Heart left ventricle (tissue), 16 donors: ENCODE measurements at regions of chr1 and their contacts with region 1.

Region 1: DNA sequence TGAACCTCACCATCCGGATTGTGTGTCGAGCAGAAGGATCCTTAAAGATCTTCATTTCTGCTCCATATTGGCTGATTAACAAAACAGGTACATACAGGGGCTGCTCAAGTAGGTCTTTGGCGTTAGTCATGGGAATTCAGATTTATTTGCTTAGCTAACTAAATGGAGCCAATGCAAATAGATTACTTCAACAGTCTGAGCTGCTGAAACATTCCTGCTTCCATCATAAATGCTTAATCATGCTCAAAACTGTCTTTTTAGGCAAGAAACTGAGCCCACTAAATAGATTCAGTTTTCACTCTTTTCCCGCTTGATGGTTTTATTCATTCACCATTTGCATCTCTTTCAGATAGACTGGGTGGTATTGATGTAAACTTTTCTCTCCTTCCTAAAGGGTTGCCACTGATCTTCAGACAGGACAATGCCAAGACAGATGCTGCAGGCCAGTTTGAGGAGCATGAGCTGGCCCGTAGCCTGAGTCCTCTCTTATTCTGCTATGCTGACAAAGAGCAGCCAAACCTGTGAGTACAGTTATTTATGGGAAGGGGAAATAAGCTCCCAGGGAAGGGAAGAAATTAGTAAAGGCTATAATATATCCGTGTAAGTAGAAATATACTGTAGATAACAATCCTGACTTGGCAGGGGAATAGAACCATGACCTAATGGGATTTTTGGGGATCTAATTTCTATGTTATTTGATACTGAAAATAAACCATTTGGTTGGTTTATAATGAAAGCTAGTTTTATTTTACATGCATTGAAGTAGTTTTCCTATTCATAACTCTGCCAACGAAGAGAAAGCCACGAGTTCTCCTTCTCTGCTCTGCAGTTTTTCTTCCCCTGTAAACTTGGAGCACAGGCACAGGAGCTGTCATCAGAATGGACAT is 126.4 kb downstream of the VPS13D start:
- DNase-seq: no peak
- ATAC-seq: peak in 3 of 4 donors; percentile 33 to 61 (median 42)
- H3K4me3 ChIP-seq: no peak overlapping the region
- H3K27ac ChIP-seq: peak overlapping the region in 4 of 12 donors; percentile 7 to 52 (median 38)
- H3K4me1 ChIP-seq: peaks cover 0 to 35% (median 19%) of the 10 kb centered on the region in 12 donors
- H3K27me3 ChIP-seq: no peaks in the 10 kb centered on the region
- CTCF ChIP-seq: no peak
- POLR2A ChIP-seq: no peak

Region 2: DNA sequence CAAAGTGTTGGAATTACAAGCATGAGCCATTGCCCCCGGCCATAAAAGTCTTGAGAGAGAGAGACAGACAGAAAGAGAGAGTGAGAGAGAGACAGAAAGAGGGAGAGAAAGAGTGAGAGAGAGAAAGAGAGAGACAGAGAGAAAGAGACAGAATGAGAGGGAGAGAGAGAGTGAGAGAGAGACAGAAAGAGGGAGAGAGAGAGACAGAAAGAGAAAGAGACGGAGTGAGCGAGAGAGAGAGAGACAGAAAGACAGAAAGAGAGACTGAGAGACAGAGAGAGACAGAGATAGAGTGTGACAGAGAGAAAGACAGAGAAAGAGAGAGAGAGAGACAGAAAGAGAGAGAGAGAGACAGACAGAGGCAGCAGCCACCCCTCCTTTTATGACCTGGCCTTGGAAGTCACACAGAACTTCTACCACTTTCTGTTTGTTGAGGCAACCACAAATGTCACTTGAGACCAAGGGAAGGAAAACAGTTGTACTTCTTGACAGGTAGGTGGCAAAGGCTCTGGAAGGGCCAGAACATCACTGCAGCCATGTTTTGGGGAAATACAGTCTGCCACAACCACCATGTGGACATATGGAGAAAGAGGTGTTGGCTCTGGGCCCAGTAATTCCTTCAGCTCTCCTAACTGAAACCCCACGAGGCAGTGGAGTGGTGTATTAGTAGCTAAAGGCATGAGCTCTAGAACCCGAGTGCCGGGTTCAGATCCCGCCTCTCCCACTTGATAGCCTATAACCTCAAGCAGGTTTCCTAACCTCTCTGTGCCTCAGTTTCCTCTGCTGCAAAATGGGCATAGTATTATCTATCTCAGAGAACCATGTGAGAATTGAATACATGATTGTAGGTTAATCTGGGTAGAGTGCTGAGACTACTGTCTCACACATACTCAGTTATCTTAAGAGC is 242.6 kb before region 1 on chr1:
- intact Hi-C with region 1: no loop called
- DNase-seq: no peak
- ATAC-seq: peak in 1 of 4 donors; percentile 11
- H3K4me3 ChIP-seq: no peak overlapping the region
- H3K27ac ChIP-seq: peak overlapping the region in 6 of 12 donors; percentile 26 to 83 (median 50)
- H3K4me1 ChIP-seq: peaks cover 0 to 13% (median 2%) of the 10 kb centered on the region in 12 donors
- H3K27me3 ChIP-seq: no peaks in the 10 kb centered on the region
- CTCF ChIP-seq: no peak
- POLR2A ChIP-seq: no peak

Region 3: GRCh38 chr1:12208764-12209494 is 147.3 kb before region 1 on chr1:
- intact Hi-C with region 1: no loop called
- DNase-seq: peak; percentile 78 to 91 (median 83)
- ATAC-seq: peak; percentile 79 to 91 (median 90)
- H3K4me3 ChIP-seq: no peak overlapping the region
- H3K27ac ChIP-seq: peak overlapping the region in 2 of 12 donors; percentile 2 to 21
- H3K4me1 ChIP-seq: peaks cover 0 to 13% (median 6%) of the 10 kb centered on the region in 12 donors
- H3K27me3 ChIP-seq: no peaks in the 10 kb centered on the region
- CTCF ChIP-seq: peak; percentile 85 to 97 (median 92)
- POLR2A ChIP-seq: no peak

Region 4: GRCh38 chr1:12314333-12314903 is 41.8 kb before region 1 on chr1:
- intact Hi-C with region 1: loop called in 1 of 10 experiments (anchors 5 kb)
- DNase-seq: no peak
- ATAC-seq: peak in 2 of 4 donors; percentile 19 to 56
- H3K4me3 ChIP-seq: no peak overlapping the region
- H3K27ac ChIP-seq: peak overlapping the region in 2 of 12 donors; percentile 11 to 67
- H3K4me1 ChIP-seq: peaks cover 0 to 20% (median 10%) of the 10 kb centered on the region in 12 donors
- H3K27me3 ChIP-seq: no peaks in the 10 kb centered on the region
- CTCF ChIP-seq: peak; percentile 10 to 70 (median 54)
- POLR2A ChIP-seq: no peak

Region 5: DNA sequence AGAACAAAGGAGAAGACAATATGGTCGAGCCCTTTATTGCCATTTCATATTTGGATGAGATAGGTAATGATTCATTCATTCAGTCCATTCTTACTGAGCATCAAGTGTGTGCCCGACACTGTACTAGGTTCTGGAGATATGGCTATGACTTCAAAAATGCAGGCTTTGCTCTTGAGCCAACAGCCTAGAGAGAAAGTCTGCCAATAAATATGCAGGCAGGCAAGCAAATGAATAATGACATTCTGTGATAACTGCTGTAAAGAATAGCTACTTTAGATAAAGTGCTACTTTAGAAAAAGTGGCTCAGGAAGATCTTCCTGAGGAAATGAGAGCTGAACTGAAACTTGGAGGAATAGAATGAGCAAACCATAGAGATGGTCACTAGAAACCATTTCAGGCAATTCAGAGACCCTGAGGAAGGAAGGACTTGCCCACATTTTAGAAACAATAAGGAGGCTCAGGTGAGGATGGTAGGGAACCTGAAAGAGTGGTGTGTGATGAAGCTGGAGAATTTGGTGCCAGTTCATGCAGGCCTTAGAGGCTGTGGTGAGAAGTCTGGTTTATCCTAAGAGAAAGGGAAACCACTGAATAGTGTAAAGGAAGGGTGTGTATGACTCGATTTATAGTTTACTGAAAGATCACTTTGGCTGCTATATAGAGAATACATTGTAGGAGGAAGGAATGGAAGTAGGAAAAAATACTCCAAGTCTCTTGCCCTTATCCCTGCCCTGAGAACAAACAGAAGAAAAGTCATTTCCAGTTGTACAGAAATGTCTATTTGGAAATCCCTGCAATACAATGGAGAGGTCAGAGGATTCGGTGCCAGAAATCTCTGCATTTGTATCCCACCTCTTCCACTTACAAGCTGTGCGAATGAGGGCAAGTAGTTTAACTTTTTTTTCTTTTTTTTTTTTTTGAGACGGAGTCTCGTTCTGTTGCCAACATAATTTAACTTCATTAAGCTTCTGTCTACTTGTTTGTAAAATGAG is 41.5 kb after region 1 on chr1:
- intact Hi-C with region 1: loop called in 1 of 10 experiments (anchors 5 kb)
- DNase-seq: no peak
- ATAC-seq: peak in 2 of 4 donors; percentile 26 to 42
- H3K4me3 ChIP-seq: no peak overlapping the region
- H3K27ac ChIP-seq: peak overlapping the region in 3 of 12 donors; percentile 1 to 38 (median 17)
- H3K4me1 ChIP-seq: peaks cover 0 to 18% (median 12%) of the 10 kb centered on the region in 12 donors
- H3K27me3 ChIP-seq: no peaks in the 10 kb centered on the region
- CTCF ChIP-seq: no peak
- POLR2A ChIP-seq: no peak